Activated CD8-positive, alpha-beta T cell treated with anti-CD3 and anti-CD28 coated beads, Interleukin-2, amount 10 ng/mL, durations not matched to agents 7 days and 5 days (primary cell): ENCODE measurements at regions of chr1 and their contacts with region 1.

Region 1: GRCh38 chr1:26695356-26696118 is at the start of gene ARID1A:
- DNase-seq: peak; percentile 96
- ATAC-seq: peak; percentile 61
- H3K4me3 Mint-ChIP-seq: peak within 1 kb of the TSS; percentile 88
- H3K27ac Mint-ChIP-seq: peak within 1 kb of the TSS; percentile 97
- H3K4me1 Mint-ChIP-seq: peaks cover 33% of the 10 kb centered on the region
- H3K27me3 Mint-ChIP-seq: no peaks in the 10 kb centered on the region
- total RNA-seq, gene ARID1A: 122 to 123 TPM

Region 2: DNA sequence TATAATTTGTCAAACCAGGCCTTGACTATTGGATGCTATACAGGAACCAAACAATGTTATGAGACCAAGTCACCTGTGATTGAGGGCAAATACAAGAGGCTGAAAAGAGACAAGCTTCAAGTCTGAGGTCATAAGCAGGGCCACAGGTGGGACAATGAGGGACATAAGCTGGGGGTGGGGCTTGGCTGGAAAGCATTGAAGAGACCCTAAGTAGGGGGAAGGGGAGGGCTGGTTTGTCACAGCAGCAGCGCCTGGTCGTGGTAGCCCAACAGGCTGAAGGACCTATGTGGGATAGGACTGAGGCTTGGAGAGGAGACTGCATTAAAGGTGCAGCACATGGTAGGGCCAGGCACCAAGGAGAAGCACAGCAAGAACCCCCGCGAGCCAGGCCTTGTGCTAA is 205.4 kb before region 1 on chr1:
- CTCF ChIA-PET with region 1: no interaction called
- POLR2A ChIA-PET with region 1: no interaction called
- DNase-seq: no peak
- ATAC-seq: no peak
- H3K4me3 Mint-ChIP-seq: no peak overlapping the region
- H3K27ac Mint-ChIP-seq: no peak overlapping the region
- H3K4me1 Mint-ChIP-seq: peaks cover 2% of the 10 kb centered on the region
- H3K27me3 Mint-ChIP-seq: no peaks in the 10 kb centered on the region

Region 3: GRCh38 chr1:26627954-26628353 is 67.6 kb before region 1 on chr1:
- CTCF ChIA-PET with region 1: interaction called, 12 read pairs
- POLR2A ChIA-PET with region 1: interaction called, 4 read pairs
- DNase-seq: no peak
- ATAC-seq: no peak
- H3K4me3 Mint-ChIP-seq: no peak overlapping the region
- H3K27ac Mint-ChIP-seq: no peak overlapping the region
- H3K4me1 Mint-ChIP-seq: no peaks in the 10 kb centered on the region
- H3K27me3 Mint-ChIP-seq: peaks cover 3% of the 10 kb centered on the region

Region 4: GRCh38 chr1:26705788-26706311 is 10.3 kb after region 1 on chr1:
- CTCF ChIA-PET with region 1: interaction called, 29 read pairs
- POLR2A ChIA-PET with region 1: interaction called, 55 read pairs
- DNase-seq: no peak
- ATAC-seq: no peak
- H3K4me3 Mint-ChIP-seq: peak overlapping the region; percentile 6
- H3K27ac Mint-ChIP-seq: peak overlapping the region; percentile 27
- H3K4me1 Mint-ChIP-seq: peaks cover 27% of the 10 kb centered on the region
- H3K27me3 Mint-ChIP-seq: no peaks in the 10 kb centered on the region

Region 5: DNA sequence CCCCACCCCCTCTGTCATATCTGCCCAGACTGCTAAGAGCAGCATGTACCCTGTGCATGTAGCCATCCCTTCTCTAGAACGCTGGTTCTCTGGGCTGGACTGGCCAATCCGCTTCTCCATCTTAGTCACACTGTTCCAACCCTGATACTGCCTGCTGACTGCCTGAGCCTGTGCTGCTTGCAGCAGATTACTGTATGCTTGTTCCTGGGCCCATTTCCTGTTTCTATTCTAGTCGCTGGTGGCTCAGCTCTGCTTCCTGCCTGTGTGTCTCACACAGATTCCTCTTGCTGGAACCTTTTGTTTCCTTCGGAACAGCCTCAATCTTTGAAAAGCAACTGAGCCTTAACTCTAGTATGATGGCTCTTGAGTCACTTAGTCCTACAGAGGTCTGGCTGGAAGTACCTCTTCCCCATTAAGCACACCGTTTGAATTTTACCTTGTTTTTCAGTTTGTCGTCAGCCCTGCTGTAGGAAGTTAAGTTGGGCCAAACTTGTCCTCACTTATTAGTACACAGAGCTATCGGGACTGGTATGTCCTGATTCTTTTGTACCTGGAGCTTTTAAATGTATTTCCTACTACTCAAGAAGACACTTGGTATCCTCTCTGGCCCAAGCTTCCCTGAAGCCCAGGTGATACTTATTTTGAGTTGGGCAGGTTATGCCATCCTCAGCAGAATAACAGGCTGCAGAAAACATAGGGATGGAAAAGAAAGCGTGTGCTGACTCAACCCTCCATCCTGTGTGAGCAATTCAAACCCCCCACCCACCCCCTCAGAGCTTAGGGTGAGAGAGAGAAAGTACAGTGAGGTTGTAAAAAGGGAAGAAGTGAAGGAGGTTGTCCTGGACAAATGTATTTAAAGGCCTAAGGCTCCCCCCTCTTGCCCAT is 48.8 kb after region 1 on chr1:
- CTCF ChIA-PET with region 1: interaction called, 15 read pairs
- POLR2A ChIA-PET with region 1: interaction called, 53 read pairs
- DNase-seq: peak; percentile 94
- ATAC-seq: peak; percentile 98
- H3K4me3 Mint-ChIP-seq: peak overlapping the region; percentile 71
- H3K27ac Mint-ChIP-seq: peak overlapping the region; percentile 97
- H3K4me1 Mint-ChIP-seq: peaks cover 83% of the 10 kb centered on the region
- H3K27me3 Mint-ChIP-seq: no peaks in the 10 kb centered on the region